ENCODE measurements at regions of chr13 and their contacts with region 1.

Region 1: GRCh38 chr13:31538067-31539042 is 201.0 kb upstream of the RXFP2 start:
- H3K4me3 ChIP-seq: no peak overlapping the region
- H3K27ac ChIP-seq: no peak overlapping the region
- H3K4me1 ChIP-seq: no peaks in the 10 kb centered on the region
- CTCF ChIP-seq: no peak

Region 2: GRCh38 chr13:30802953-30803478 is 735.3 kb before region 1 on chr13:
- CTCF ChIA-PET with region 1: no interaction called
- POLR2A ChIA-PET with region 1: no interaction called
- H3K4me3 ChIP-seq: no peak overlapping the region
- H3K27ac ChIP-seq: no peak overlapping the region
- H3K4me1 ChIP-seq: no peaks in the 10 kb centered on the region
- CTCF ChIP-seq: peak; percentile 75

Region 3: DNA sequence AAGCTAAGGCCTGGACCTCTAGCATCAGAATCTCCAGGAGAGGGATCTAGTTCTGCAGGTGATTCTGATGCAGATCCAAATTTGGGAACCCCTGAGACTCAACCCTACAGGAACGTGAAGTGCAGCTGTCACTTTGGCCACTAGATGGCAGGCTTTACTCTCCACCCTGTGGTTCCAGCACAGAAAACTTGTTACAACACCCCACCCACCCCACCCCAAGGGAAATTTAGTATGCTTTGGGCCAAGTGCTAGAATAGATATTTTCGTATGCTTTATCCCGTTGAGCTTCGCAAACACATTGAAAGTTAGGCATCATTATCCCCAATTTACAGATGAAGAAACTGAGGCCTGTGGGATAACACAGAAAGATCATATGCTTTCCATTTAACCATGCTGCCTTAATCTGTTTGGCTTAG is 106.6 kb before region 1 on chr13:
- CTCF ChIA-PET with region 1: interaction called, 11 read pairs
- POLR2A ChIA-PET with region 1: no interaction called
- H3K4me3 ChIP-seq: no peak overlapping the region
- H3K27ac ChIP-seq: no peak overlapping the region
- H3K4me1 ChIP-seq: no peaks in the 10 kb centered on the region
- CTCF ChIP-seq: no peak

Region 4: GRCh38 chr13:31518645-31519044 is 19.7 kb before region 1 on chr13:
- CTCF ChIA-PET with region 1: interaction called, 12 read pairs
- POLR2A ChIA-PET with region 1: no interaction called
- H3K4me3 ChIP-seq: no peak overlapping the region
- H3K27ac ChIP-seq: no peak overlapping the region
- H3K4me1 ChIP-seq: no peaks in the 10 kb centered on the region
- CTCF ChIP-seq: no peak